ENCODE measurements at regions of chr2 and their contacts with region 1.

Region 1: GRCh38 chr2:34519659-34520058 is 920.6 kb upstream of the FAM98A start:
- DNase-seq: no peak
- ATAC-seq: no peak

Region 2: GRCh38 chr2:34474646-34475045 is 45.0 kb before region 1 on chr2:
- intact Hi-C with region 1: loop called (anchors 2 kb)
- DNase-seq: no peak
- ATAC-seq: no peak

Region 3: GRCh38 chr2:34547900-34548299 is 28.2 kb after region 1 on chr2:
- intact Hi-C with region 1: no loop called
- DNase-seq: no peak
- ATAC-seq: no peak